ENCODE measurements at regions of chr5 and their contacts with region 1.

Region 1: GRCh38 chr5:137778772-137779564 is 24.8 kb upstream of the HNRNPA0 start:
- DNase-seq: no peak
- ATAC-seq: 0 out of 3 replicates have a peak, but pooled peaks have one; percentile 27
- H3K4me3 ChIP-seq: no peak overlapping the region
- H3K27ac ChIP-seq: no peak overlapping the region
- H3K4me1 ChIP-seq: peaks cover 3% of the 10 kb centered on the region; the same call in 1 of the 2 replicates
- H3K27me3 ChIP-seq: no peaks in the 10 kb centered on the region
- CTCF ChIP-seq: peak; percentile 63 to 65 (median 63)
- EP300 ChIP-seq: no peak
- POLR2A ChIP-seq: no peak
- RAD21 ChIP-seq: peak; percentile 94

Region 2: DNA sequence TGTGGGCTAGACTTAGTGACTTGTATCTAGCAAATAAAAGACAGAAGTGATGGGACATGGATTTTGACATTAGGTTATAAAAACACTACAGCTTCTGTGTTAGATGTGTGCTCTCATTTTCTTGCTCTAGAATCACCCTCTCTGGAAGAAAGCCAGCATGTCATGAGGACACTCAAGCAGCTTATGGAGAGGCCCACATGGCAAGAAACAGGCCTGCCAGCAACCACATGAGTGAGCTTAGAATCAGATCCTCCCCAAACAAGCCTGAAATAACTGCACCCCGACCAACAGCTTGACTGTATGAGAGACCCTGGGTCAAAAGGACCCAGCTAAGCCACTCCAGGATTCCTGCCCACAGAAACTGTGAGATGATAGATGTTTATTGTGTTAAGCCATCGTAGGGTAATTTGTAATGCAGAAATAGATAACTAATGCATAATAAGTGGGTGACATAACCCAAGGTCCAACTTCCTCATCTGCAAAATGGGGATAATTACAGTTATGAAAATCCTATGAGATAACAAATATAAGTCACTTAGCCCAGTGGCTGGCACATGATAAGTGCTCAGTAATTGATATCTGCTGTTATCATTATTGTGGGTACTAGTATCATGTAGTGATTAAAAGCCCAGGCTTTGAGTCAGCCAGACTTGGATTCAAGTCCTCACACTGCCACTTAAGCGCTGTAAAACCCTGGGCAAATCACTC is 129.6 kb before region 1 on chr5:
- CTCF ChIA-PET with region 1: no interaction called
- POLR2A ChIA-PET with region 1: no interaction called
- RAD21 ChIA-PET with region 1: no interaction called
- SMC1A ChIA-PET with region 1: no interaction called
- in situ Hi-C with region 1: no loop called
- intact Hi-C with region 1: no loop called
- DNase-seq: no peak
- ATAC-seq: no peak
- H3K4me3 ChIP-seq: no peak overlapping the region
- H3K27ac ChIP-seq: no peak overlapping the region
- H3K4me1 ChIP-seq: no peaks in the 10 kb centered on the region
- H3K27me3 ChIP-seq: no peaks in the 10 kb centered on the region
- CTCF ChIP-seq: no peak
- EP300 ChIP-seq: no peak
- POLR2A ChIP-seq: no peak
- RAD21 ChIP-seq: no peak

Region 3: GRCh38 chr5:137760330-137761188 is 18.4 kb before region 1 on chr5:
- CTCF ChIA-PET with region 1: interaction called, 19 read pairs
- POLR2A ChIA-PET with region 1: no interaction called
- RAD21 ChIA-PET with region 1: no interaction called
- SMC1A ChIA-PET with region 1: interaction called, 8 read pairs
- in situ Hi-C with region 1: no loop called
- intact Hi-C with region 1: no loop called
- DNase-seq: no peak
- ATAC-seq: no peak
- H3K4me3 ChIP-seq: no peak overlapping the region
- H3K27ac ChIP-seq: no peak overlapping the region
- H3K4me1 ChIP-seq: peaks cover 17% of the 10 kb centered on the region
- H3K27me3 ChIP-seq: no peaks in the 10 kb centered on the region
- CTCF ChIP-seq: no peak
- EP300 ChIP-seq: no peak
- POLR2A ChIP-seq: no peak
- RAD21 ChIP-seq: no peak

Region 4: DNA sequence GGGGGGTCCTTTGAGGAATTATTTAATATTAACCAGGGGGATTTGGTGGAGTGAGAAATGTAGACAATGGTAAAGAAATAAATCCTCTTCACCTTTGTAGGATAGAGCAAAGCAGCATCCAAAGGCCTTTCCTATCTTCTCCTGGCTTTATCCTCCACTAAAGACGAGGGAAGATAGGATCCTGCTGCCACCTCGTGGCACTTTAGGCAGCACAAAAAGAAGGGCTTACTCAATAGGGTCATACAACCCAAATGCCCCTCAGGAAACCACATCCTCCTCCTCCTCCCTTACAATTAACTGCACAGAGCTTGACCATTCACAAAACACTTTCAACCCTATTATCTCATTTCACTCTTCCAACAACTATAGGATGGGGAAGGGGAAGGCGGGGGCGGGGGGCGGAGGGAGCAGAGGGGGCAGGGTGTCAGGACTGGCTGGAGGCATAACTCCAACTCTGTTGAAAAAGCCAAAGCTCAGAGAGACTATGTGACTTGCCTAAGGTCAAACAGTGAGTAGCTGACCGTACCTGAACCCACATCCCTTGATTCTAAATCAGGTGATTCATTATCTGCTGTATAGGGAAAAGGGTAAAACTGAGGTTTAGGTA is 43.3 kb after region 1 on chr5:
- CTCF ChIA-PET with region 1: interaction called, 23 read pairs
- POLR2A ChIA-PET with region 1: interaction called, 3 read pairs
- RAD21 ChIA-PET with region 1: interaction called, 13 read pairs
- SMC1A ChIA-PET with region 1: interaction called, 12 read pairs
- in situ Hi-C with region 1: no loop called
- intact Hi-C with region 1: loop called (anchors 1 kb)
- DNase-seq: no peak
- ATAC-seq: peak; percentile 84
- H3K4me3 ChIP-seq: no peak overlapping the region
- H3K27ac ChIP-seq: no peak overlapping the region
- H3K4me1 ChIP-seq: no peaks in the 10 kb centered on the region
- H3K27me3 ChIP-seq: no peaks in the 10 kb centered on the region
- CTCF ChIP-seq: peak; percentile 26 to 56 (median 46); a peak in 5 of 6 replicates
- EP300 ChIP-seq: no peak
- POLR2A ChIP-seq: no peak
- RAD21 ChIP-seq: peak; percentile 70

Region 5: DNA sequence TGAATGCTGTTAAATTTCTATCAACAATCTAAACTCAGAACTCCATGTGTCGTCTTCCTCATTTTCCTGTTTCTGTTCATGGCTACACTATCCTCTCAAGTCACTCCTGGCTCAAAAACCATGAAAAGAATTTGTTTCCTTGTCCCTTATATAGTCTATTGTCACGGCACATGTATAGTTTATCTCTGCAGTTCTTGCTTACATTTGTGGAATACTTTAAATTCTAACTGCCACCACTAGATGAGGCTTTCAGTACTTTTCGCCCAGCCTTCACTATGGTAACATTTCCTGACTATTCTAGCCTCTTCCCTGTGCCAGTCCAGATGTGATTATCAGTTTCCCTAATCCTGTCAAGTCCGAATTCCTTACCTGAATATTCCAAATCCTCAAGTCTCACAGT is 144.9 kb after region 1 on chr5:
- CTCF ChIA-PET with region 1: interaction called, 11 read pairs
- POLR2A ChIA-PET with region 1: no interaction called
- RAD21 ChIA-PET with region 1: interaction called, 3 read pairs
- SMC1A ChIA-PET with region 1: interaction called, 4 read pairs
- in situ Hi-C with region 1: no loop called
- intact Hi-C with region 1: no loop called
- DNase-seq: no peak
- ATAC-seq: no peak
- H3K4me3 ChIP-seq: no peak overlapping the region
- H3K27ac ChIP-seq: no peak overlapping the region
- H3K4me1 ChIP-seq: no peaks in the 10 kb centered on the region
- H3K27me3 ChIP-seq: no peaks in the 10 kb centered on the region
- CTCF ChIP-seq: no peak; a peak in 1 of 6 replicates
- EP300 ChIP-seq: no peak
- POLR2A ChIP-seq: no peak
- RAD21 ChIP-seq: no peak

Region 6: GRCh38 chr5:137960141-137960540 is 181.2 kb after region 1 on chr5:
- CTCF ChIA-PET with region 1: interaction called, 23 read pairs
- POLR2A ChIA-PET with region 1: no interaction called
- RAD21 ChIA-PET with region 1: interaction called, 7 read pairs
- SMC1A ChIA-PET with region 1: interaction called, 6 read pairs
- in situ Hi-C with region 1: no loop called
- intact Hi-C with region 1: no loop called
- DNase-seq: no peak
- ATAC-seq: no peak
- H3K4me3 ChIP-seq: no peak overlapping the region
- H3K27ac ChIP-seq: no peak overlapping the region
- H3K4me1 ChIP-seq: no peaks in the 10 kb centered on the region
- H3K27me3 ChIP-seq: no peaks in the 10 kb centered on the region
- CTCF ChIP-seq: no peak
- EP300 ChIP-seq: no peak
- POLR2A ChIP-seq: no peak
- RAD21 ChIP-seq: no peak

Region 7: GRCh38 chr5:138065102-138065501 is 286.1 kb after region 1 on chr5:
- CTCF ChIA-PET with region 1: interaction called, 111 read pairs
- POLR2A ChIA-PET with region 1: interaction called, 3 read pairs
- RAD21 ChIA-PET with region 1: interaction called, 15 read pairs
- SMC1A ChIA-PET with region 1: interaction called, 10 read pairs
- in situ Hi-C with region 1: no loop called
- intact Hi-C with region 1: loop called (anchors 2 kb)
- DNase-seq: no peak
- ATAC-seq: peak; percentile 66
- H3K4me3 ChIP-seq: no peak overlapping the region
- H3K27ac ChIP-seq: no peak overlapping the region
- H3K4me1 ChIP-seq: no peaks in the 10 kb centered on the region
- H3K27me3 ChIP-seq: no peaks in the 10 kb centered on the region
- CTCF ChIP-seq: peak; percentile 45 to 66 (median 45); a peak in 5 of 6 replicates
- EP300 ChIP-seq: no peak
- POLR2A ChIP-seq: no peak
- RAD21 ChIP-seq: peak; percentile 33; the same call in 1 of the 2 replicates

Measured in GM12878 (cell line).